ENCODE measurements at regions of chr9 and their contacts with region 1.

Region 1: DNA sequence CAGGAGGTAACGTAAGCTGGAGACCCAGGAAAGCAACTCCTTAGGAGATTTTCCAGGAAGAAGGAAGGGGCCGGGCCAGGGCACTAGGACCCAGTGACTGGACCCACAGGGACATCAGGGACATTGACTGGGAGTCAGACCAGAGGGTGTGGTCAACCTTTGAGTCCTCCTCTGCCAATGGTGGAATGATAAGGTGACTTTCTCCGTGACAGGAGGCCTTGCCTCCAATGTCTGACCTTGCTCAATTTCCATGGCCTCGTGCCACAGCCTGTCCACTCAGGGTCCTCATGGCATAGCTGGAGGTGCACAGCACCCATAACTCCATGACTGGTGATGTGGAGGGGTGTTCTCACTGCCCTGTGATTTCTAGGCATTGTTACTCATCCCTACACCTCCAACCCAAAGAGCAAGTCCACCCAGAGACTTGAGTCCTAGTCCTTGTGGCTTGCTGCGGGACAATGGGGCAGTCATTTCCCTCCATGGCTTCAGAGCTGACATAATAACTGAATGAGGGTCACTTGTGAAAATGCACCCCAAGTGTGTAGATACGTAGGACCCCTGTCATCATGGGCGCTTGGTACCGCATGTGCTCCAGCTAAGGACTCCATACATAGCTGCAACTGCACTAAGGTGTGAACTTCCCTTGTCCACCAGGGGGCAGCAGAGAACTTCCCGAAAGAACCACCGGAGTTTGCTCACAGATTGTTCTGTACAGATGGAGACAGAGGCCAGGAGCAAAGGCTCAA is 4.1 kb upstream of the AMBP start:
- DNase-seq: peak; percentile 82
- CTCF ChIP-seq: peak; percentile 85

Region 2: GRCh38 chr9:114098016-114098935 is 16.1 kb after region 1 on chr9:
- CTCF ChIA-PET with region 1: interaction called, 48 read pairs
- POLR2A ChIA-PET with region 1: no interaction called
- DNase-seq: no peak
- CTCF ChIP-seq: no peak

Region 3: DNA sequence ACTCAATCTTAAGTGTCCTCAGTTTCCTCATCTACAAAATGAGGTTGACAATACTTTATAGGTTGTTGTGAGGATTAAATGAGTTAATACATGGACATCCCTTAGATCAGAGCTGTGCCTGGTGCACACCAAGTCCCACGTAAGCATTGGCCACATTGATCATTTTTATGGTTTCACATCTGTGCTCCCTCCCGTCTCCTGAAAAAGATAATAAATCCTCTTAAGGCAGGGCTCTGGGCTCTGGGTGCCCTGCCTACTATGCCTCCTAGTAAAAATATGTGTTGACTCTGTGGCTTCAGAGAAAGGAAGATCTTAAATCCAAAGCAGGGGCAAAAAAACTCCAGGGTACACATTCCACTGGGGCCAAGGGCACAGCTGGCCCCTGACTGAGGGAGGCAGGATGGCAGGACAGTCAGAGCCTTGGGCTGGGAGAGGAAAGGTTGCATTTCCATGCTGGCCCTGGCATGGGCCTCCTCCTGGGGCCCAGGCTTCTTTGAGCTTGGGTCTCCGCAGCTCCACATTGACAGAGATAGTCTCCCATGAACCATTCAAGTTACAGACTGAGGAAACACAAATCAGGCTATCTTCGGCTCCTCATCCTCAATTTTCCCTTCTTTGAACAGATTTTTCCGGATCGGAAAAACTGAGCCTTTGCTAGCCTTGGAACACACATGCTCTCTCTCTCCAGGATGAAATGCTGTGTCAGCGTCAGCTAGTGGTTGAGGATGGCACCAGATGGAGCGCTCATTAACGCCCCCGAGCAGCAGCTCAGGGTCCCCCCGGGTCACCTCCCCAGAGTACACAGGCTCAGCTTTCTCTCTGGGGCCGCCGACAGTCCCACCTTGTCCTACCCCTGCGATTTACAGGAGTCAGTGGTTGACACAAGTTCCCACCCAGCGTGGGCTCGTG is 39.3 kb after region 1 on chr9:
- CTCF ChIA-PET with region 1: interaction called, 10 read pairs
- POLR2A ChIA-PET with region 1: no interaction called
- DNase-seq: no peak
- CTCF ChIP-seq: no peak

Region 4: DNA sequence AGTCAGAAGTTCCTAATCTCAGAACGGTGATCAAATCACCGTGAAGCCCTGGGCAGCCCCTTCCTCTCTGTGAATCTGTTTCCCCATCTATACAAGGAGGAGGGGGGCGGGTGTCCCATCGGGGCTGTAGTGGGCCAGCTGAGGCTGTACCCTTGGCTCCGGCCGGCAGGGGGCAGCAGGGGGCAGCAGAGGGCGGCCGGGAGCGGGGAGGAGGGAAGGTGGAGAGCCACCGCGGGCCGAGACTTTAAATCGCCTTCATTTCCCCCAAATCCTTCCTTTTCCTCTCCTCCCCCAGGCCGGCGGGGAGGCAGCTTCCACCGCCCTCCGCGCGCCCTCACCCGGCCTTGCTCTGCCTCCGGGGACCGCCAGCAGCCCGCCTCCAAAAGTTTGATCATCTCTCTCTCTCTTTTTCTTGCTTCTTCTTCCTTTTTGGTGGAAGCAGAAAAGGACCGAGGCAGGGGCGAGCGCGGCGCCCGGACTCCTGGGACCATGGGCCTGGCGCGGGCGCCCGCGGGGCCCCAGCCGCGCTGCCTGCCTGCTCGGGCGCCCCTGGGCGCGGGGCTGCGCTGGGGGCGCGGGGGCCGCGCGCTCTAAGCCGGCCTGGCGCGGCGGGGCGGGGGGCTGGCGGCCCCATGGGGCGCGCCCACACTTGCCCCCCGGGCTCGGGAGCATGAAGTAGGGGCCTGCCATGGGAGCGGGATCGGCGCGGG is 73.2 kb after region 1 on chr9 and contains the start of gene COL27A1:
- CTCF ChIA-PET with region 1: interaction called, 10 read pairs
- POLR2A ChIA-PET with region 1: no interaction called
- DNase-seq: peak; percentile 90
- CTCF ChIP-seq: peak; percentile 92

Region 5: DNA sequence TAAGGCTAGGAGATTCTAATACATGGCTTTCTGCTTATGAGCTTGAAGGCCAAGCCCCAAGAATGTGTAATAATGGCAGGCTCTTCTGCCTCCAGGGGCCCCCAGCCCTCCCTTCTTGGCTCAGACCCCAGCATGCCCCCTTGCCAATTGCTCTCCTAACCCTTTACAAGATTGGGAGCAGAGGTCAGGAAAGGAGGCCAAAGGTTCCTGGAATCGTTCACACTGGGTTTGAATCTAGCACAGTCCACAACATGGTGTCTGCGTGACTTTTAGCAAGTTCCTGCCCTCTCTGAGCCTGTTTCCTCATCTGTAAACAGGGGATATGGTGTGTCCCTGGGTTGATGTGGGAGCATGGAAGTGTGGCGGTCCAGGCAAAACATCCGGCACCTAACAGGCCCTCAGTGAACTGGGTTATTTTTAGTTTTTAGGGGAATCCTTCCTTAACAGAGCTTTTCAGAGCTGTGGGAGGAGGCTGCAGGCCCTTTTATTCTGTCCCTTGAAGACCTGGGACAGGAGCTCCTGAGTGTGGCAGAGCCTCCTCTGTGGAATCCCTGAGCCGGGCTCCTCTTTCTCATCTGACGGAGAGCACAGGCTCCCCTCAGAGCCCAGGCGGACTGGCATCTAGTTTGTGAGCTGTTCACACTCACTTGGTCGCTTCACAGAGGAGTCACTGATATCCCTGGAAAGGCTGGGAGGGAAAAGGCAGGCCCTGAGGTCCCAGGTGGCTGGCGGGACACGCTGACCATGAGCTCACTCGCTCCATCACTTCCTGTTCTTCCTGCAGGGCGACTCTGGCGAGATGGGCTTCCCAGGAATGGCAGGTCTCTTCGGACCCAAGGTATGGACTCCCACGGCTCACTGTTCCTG is 217.3 kb after region 1 on chr9:
- CTCF ChIA-PET with region 1: interaction called, 80 read pairs
- POLR2A ChIA-PET with region 1: no interaction called
- DNase-seq: no peak
- CTCF ChIP-seq: no peak